MCF 10A (cell line): ENCODE measurements at regions of chr12 and their contacts with region 1.

Region 1: DNA sequence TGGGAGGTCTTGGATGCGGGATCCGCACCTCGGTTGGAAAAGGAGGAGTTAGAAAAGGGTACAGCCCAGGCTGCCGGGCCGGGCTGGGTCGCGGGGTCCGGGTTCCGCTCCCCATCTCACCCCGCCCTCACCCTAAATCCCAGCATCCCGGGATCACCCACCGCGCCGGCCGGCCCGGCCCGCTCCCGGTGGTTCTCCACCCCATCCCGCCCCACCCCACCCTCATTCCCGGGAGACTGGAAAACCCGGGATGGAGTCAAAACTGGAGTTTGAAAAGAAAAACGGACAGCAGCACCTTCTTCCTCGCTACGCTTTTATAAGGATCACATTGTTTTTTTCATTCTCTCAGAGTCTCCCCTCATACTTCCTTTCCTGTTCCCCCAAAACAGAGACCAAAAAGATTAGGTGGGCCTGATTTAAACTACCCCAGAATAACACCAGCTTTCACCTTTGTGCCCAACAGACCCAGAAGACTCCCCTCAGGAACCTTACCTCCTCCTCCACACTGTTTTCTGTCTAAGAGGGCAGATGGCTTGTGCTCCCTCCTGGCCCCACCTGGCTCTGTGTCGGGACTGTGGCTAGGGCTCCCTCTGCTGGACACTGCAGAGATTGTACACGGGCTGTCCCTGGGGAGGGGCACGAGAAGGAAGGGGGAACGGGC is 2.8 kb downstream of the GLI1 start:
- DNase-seq: peak; percentile 92
- H3K4me3 Mint-ChIP-seq: peak overlapping the region; percentile 70
- H3K27ac Mint-ChIP-seq: peak overlapping the region; percentile 67
- H3K4me1 Mint-ChIP-seq: peaks cover 25% of the 10 kb centered on the region
- H3K27me3 Mint-ChIP-seq: peaks cover 59% of the 10 kb centered on the region
- CTCF ChIP-seq: peak; percentile 93

Region 2: DNA sequence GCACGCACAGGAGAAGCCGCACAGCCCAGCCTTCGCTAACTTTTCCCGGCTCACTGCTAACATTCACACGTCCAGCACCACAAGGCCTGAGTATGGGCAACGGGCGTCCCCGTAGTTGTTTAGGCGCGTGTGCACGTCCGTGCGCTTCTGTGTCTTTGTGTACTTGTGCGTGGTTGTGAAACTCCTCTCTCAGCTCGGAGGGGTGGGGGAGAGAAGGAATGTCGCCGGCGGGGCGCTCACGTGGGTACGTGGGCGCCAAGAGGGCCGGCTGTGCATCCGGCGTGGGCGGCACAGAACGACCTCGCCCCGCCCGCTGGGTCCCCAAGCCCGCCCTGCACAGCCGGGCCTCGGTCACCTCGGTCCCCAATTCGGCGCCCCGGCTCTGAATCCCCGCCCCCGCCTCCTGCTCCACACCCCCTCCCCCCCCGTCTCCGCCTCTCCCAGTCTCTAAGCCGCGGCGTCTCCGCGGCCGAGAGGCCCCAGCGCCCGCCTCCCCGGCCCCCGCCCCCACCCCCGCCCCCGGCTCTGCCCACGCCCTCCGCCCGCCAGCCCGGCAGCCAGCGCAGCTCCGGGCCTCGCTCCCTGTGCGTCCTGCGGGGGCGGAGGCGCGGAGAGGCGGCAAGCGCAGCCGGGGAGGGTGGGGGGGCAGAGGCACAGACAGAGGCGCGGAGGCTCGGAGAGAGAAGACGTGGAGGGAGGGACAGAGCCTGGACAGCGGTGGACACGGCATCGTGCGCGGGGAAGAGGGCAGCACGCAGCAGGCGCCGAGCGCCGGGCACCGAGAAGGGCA is 373.7 kb before region 1 on chr12 and contains the start of gene NAB2:
- CTCF ChIA-PET with region 1: no interaction called
- POLR2A ChIA-PET with region 1: no interaction called
- intact Hi-C with region 1: no loop called
- DNase-seq: peak; percentile 96
- H3K4me3 Mint-ChIP-seq: peak within 1 kb of the TSS; percentile 90
- H3K27ac Mint-ChIP-seq: peak within 1 kb of the TSS; percentile 94
- H3K4me1 Mint-ChIP-seq: peaks cover 36% of the 10 kb centered on the region
- H3K27me3 Mint-ChIP-seq: no peaks in the 10 kb centered on the region
- CTCF ChIP-seq: no peak
- total RNA-seq, gene NAB2: 25.8 and 30.6 TPM in 2 replicates

Region 3: DNA sequence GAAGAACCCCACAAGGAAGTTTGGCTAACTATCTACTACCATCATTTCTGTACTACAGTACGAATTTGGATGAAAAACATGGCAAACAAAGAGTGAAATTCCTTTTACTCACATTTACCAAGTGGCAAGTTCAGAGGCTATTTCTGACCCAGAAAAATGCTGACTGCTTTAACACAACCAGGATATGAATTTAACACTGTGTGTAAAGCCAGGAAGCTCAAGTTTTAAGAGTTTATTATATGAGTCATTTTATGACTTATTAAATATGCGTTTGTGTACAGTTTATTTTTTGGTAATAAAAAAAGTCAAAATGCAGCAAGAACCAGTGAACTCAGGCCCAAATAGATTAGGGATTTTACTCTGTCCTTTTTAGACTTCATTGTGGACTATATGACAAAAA is 153.0 kb before region 1 on chr12:
- CTCF ChIA-PET with region 1: interaction called, 21 read pairs
- POLR2A ChIA-PET with region 1: interaction called, 3 read pairs
- intact Hi-C with region 1: no loop called
- DNase-seq: no peak
- H3K4me3 Mint-ChIP-seq: no peak overlapping the region
- H3K27ac Mint-ChIP-seq: peak overlapping the region; percentile 66
- H3K4me1 Mint-ChIP-seq: peaks cover 13% of the 10 kb centered on the region
- H3K27me3 Mint-ChIP-seq: no peaks in the 10 kb centered on the region
- CTCF ChIP-seq: no peak

Region 4: DNA sequence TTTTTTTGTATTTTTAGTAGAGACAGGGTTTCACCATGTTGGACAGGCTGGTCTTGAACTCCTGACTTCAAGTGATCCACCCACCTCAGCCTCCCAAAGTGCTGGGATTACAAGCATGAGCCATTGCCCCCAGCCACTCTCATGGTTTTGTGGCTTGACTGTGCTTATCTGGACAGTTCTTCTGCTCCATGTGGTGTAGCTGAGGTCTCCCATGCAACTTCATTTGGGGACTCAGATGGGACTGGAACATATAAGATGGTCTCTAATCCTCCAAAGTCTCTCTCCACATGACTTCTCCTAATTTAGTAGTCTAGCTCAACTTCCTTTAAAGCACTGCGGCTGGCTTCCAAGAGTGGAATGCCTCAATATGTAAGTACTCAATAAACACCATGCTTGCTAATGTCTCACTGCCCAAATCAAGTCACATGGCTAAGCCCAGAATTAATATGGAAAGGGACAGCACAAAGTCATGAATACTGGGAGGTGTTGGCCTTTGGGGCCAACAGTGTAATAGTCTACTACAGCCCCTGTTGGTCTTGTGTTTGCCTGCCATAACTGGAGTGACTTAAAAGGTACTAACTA is 20.4 kb before region 1 on chr12:
- CTCF ChIA-PET with region 1: interaction called, 10 read pairs
- POLR2A ChIA-PET with region 1: interaction called, 4 read pairs
- intact Hi-C with region 1: no loop called
- DNase-seq: no peak
- H3K4me3 Mint-ChIP-seq: no peak overlapping the region
- H3K27ac Mint-ChIP-seq: no peak overlapping the region
- H3K4me1 Mint-ChIP-seq: no peaks in the 10 kb centered on the region
- H3K27me3 Mint-ChIP-seq: no peaks in the 10 kb centered on the region
- CTCF ChIP-seq: no peak

Region 5: GRCh38 chr12:57520053-57520871 is 57.9 kb after region 1 on chr12 and contains the start of gene DDIT3:
- CTCF ChIA-PET with region 1: interaction called, 12 read pairs
- POLR2A ChIA-PET with region 1: interaction called, 7 read pairs
- intact Hi-C with region 1: no loop called
- DNase-seq: peak; percentile 99
- H3K4me3 Mint-ChIP-seq: peak within 1 kb of the TSS; percentile 90
- H3K27ac Mint-ChIP-seq: peak within 1 kb of the TSS; percentile 98
- H3K4me1 Mint-ChIP-seq: peaks cover 50% of the 10 kb centered on the region
- H3K27me3 Mint-ChIP-seq: no peaks in the 10 kb centered on the region
- CTCF ChIP-seq: no peak
- total RNA-seq, gene DDIT3: 156 and 168 TPM in 2 replicates